Ascending aorta (tissue), 2 donors: ENCODE measurements at regions of chr9 and their contacts with region 1.

Region 1: DNA sequence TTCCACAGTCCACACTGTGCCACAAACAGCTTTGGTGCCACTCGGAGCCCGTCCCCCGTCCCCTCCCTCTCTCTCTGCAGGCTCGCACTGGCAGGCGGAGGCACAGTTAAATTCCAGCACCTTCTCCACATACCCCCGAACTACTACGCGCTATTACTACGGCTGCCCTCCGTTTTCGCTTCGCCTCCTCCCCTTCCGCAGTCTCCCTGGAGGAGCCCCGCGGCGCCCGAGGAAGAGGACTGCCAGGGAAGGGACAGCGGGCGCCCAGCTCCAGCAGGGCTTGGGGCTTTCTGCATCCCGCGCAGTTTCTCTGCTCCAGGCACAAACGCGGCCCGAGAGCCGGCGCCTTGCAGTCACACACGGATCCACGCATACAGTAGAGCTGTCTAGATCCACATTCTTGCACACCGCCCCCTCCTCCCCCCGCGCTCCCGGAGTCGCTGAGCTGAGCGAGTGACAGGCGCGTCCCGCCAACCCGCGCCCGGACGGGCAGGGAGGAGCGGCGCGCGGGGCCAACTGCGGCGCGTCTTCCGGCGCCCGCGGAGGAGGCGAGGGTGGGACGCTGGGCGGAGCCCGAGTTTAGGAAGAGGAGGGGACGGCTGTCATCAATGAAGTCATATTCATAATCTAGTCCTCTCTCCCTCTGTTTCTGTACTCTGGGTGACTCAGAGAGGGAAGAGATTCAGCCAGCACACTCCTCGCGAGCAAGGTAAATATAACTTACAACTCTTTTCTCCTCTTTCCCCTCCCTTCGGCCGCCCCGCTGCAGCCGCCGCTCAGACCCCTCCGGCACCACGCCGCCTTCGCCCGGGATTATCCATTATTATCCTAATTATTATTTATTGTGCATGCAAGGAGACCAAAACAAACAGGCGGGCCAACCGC is at the start of gene SMARCA2:
- DNase-seq: peak; percentile 95 to 99
- H3K4me3 ChIP-seq: peak within 1 kb of the TSS; percentile 92 to 96
- H3K27ac ChIP-seq: peak within 1 kb of the TSS; percentile 99 to 100
- H3K4me1 ChIP-seq: peaks cover 0 to 19% of the 10 kb centered on the region in 2 donors
- H3K27me3 ChIP-seq: no peaks in the 10 kb centered on the region
- CTCF ChIP-seq: no peak
- total RNA-seq, gene SMARCA2: 160 TPM

Region 2: DNA sequence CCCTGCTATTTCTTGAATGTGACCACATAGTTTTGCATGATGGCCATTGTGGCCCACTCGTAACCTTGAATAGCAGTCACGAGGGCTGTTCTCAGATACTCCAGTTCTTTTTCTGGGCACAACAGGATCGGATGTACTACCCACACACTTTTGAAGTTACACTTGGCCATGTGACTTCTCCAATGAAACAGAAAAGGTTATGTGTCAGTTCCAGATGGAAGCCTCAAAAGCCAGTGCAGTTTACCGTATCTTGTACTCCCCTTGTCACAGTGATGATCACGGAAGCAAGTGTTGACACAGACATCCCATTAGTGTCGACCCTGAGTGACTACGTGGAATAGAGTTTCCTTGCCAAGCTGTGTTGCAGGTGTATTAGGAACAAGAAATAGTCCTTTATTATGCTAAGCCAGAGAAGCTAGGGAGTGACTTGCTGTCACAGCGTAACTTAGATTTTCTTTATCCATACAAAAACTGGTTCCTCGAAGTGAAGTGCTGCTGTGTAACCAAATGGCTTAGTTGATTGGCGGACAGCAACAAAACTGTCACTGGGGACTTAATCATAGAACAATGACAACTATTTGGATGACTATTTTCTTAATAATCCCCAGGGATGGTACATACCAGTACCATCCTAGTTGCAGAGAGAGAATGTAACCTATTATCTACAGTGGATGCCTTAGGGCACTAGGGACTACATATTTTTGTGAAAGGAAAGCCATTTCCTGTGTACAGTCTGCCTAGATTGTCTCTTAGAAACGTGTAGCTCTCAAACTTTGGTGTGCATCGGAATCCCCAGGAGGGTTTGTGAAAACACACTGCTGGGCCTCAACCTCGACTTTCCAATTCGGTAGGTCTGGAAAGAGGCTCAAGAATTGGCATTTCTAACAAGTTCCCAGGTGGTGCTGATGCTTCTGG is 1263.5 kb before region 1 on chr9:
- intact Hi-C with region 1: loop called (anchors 5 kb)
- DNase-seq: no peak
- H3K4me3 ChIP-seq: peak overlapping the region in 1 of 2 donors; percentile 37
- H3K27ac ChIP-seq: peak overlapping the region; percentile 92 to 95
- H3K4me1 ChIP-seq: peaks cover 25 to 45% of the 10 kb centered on the region in 2 donors
- H3K27me3 ChIP-seq: no peaks in the 10 kb centered on the region
- CTCF ChIP-seq: no peak

Region 3: GRCh38 chr9:2053883-2054845 is 39.2 kb after region 1 on chr9:
- intact Hi-C with region 1: loop called (anchors 2 kb)
- DNase-seq: peak; percentile 10 to 83
- H3K4me3 ChIP-seq: peak overlapping the region in 1 of 2 donors; percentile 15
- H3K27ac ChIP-seq: peak overlapping the region; percentile 23 to 67
- H3K4me1 ChIP-seq: peaks cover 0 to 8% of the 10 kb centered on the region in 2 donors
- H3K27me3 ChIP-seq: no peaks in the 10 kb centered on the region
- CTCF ChIP-seq: no peak

Region 4: GRCh38 chr9:2125906-2126305 is 111.0 kb after region 1 on chr9:
- intact Hi-C with region 1: loop called (anchors 2 kb)
- DNase-seq: no peak
- H3K4me3 ChIP-seq: peak overlapping the region; percentile 36 to 37
- H3K27ac ChIP-seq: peak overlapping the region; percentile 85 to 89
- H3K4me1 ChIP-seq: peaks cover 7 to 73% of the 10 kb centered on the region in 2 donors
- H3K27me3 ChIP-seq: no peaks in the 10 kb centered on the region
- CTCF ChIP-seq: no peak

Region 5: DNA sequence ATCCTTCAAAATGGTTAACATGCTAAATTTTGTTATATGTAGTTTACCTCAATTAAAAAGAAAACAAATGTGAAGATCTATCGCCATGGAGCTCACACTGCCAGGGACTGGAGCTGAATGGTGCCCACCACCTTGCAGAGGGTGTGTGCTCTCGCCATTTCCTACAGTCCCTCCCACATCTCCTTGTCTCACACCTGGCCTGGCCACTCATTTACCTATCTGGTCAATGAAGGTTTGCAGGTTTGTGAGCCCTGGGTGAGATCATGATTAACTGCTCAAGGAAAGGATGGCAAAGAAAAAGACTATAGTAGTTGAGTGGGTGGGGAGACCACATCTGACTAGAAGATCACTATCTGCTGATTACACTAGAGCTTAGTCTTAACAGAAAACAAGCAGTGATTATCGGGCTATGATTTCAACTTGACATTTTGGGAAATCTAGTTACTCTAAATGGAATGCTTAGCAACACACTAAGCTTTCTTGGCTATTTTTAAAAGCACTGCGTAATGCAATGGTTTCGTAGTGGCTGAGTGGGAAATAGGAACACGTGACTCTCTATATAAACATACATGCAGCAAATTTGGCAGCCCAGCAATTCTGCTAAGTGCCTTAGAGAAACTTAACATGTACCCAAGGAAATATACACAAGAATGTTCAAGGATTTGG is 801.7 kb after region 1 on chr9:
- intact Hi-C with region 1: loop called (anchors 2 kb)
- DNase-seq: peak; percentile 12 to 88
- H3K4me3 ChIP-seq: no peak overlapping the region
- H3K27ac ChIP-seq: peak overlapping the region; percentile 84 to 93
- H3K4me1 ChIP-seq: peaks cover 6 to 18% of the 10 kb centered on the region in 2 donors
- H3K27me3 ChIP-seq: no peaks in the 10 kb centered on the region
- CTCF ChIP-seq: no peak

Region 6: GRCh38 chr9:2849941-2850340 is 835.0 kb after region 1 on chr9:
- intact Hi-C with region 1: loop called (anchors 2 kb)
- DNase-seq: no peak
- H3K4me3 ChIP-seq: no peak overlapping the region
- H3K27ac ChIP-seq: no peak overlapping the region
- H3K4me1 ChIP-seq: peaks cover 0 to 6% of the 10 kb centered on the region in 2 donors
- H3K27me3 ChIP-seq: no peaks in the 10 kb centered on the region
- CTCF ChIP-seq: no peak